ENCODE measurements at regions of chr5 and their contacts with region 1.

Region 1: DNA sequence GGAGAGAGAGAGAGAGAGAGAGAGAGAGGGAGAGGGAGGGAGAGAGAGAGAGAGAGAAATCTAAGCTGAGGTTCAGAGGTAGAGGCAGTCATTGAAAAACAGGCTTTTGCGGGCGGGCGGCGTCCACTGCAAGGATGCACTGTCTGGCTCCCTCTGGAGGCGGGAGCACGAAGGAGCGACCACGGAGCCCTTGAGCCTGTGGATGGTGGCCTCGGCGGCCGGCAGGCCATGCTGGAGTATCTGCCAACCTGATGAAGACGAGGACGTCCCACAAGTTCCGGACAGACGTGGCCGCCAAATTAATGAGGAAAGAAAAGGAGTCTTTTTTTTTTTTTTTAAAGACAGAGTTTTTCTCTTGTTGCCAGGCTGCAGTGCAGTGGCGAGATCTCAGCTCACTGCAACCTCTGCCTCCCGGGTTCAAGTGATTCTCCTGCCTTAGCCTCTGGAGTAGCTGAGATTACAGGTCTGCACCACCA is 2.2 kb upstream of the CCDC125 start:
- DNase-seq: peak; percentile 90
- ATAC-seq: peak; percentile 89 to 90

Region 2: GRCh38 chr5:69042915-69043658 is 291.7 kb before region 1 on chr5:
- intact Hi-C with region 1: loop called in 1 of 2 experiments (anchors 2 kb)
- DNase-seq: peak; percentile 58
- ATAC-seq: peak; percentile 95 to 97

Measured in left cardiac atrium (tissue), 4 donors.